ENCODE measurements at regions of chr4 and their contacts with region 1.

Region 1: GRCh38 chr4:89294573-89295269 is 12.9 kb downstream of the GPRIN3 start:
- DNase-seq: peak in 7 of 9 donors; percentile 62 to 88 (median 81)
- ATAC-seq: peak; percentile 86
- H3K4me3 ChIP-seq: peak overlapping the region; percentile 21
- H3K4me3 Mint-ChIP-seq: peak overlapping the region; percentile 38 to 83 (median 73)
- H3K27ac ChIP-seq: peak overlapping the region; percentile 69
- H3K27ac Mint-ChIP-seq: peak overlapping the region; percentile 81 to 97 (median 94)
- H3K4me1 ChIP-seq: peaks cover 73 to 82% of the 10 kb centered on the region in 2 donors
- H3K4me1 Mint-ChIP-seq: peaks cover 57 to 99% (median 86%) of the 10 kb centered on the region in 7 donors
- H3K27me3 ChIP-seq: no peaks in the 10 kb centered on the region
- H3K27me3 Mint-ChIP-seq: no peaks in the 10 kb centered on the region

Region 2: DNA sequence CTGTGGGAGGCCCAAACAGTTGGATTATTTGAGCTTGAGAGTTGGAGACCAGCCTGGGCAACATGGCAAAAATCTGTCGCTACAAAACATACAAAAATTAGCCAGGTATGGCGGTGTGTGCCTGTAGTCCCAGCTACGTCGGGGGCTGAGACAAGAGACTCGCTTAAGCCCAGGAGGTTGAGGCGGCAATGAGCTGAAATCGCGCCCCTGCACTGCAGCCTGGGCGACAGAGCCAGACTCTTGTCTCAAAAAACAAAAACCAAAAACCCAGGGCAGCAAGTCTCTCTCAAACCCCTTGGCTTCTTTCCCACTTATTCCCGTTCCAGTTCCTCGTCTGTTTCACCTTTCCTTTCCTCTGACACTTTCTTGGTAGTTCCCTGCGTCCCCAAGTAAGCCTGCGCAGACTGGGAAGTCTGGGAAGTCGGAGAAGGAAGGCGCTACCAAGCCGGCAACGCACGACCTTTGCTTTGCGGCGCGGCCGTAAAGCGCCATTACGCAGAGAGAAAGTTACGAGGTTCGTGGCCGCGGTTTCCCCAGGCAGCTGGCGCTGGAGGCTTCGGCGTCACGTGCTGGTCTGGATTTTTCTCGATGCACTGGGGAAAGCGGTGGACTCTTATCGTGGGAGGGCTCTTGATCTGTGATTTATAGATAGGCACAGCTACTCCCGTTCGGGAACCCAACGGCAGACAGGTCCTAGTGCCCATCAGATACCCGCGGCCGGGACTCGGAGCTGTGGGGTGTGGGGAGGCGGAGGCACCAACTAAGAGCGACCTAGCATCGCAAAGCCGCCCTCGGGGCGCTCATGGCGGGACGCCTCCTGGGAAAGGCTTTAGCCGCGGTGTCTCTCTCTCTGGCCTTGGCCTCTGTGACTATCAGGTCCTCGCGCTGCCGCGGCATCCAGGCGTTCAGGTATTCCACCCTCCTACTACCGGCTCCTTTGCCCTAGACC is 1872.3 kb before region 1 on chr4 and contains the start of gene NUDT9:
- CTCF ChIA-PET with region 1: no interaction called
- POLR2A ChIA-PET with region 1: no interaction called
- intact Hi-C with region 1: loop called in 1 of 2 experiments (anchors 5 kb)
- DNase-seq: peak; percentile 74 to 92 (median 89)
- ATAC-seq: peak; percentile 92
- H3K4me3 ChIP-seq: peak within 1 kb of the TSS; percentile 96
- H3K4me3 Mint-ChIP-seq: peak within 1 kb of the TSS; percentile 94 to 100 (median 98)
- H3K27ac ChIP-seq: peak within 1 kb of the TSS; percentile 85
- H3K27ac Mint-ChIP-seq: peak within 1 kb of the TSS; percentile 97 to 100 (median 99)
- H3K4me1 ChIP-seq: peaks cover 17% of the 10 kb centered on the region in 2 donors
- H3K4me1 Mint-ChIP-seq: peaks cover 14 to 59% (median 48%) of the 10 kb centered on the region in 7 donors
- H3K27me3 ChIP-seq: no peaks in the 10 kb centered on the region
- H3K27me3 Mint-ChIP-seq: no peaks in the 10 kb centered on the region
- total RNA-seq, gene NUDT9: 9.7 to 18.1 (median 10.5) TPM

Region 3: GRCh38 chr4:88443486-88443885 is 851.2 kb before region 1 on chr4:
- CTCF ChIA-PET with region 1: no interaction called
- POLR2A ChIA-PET with region 1: no interaction called
- intact Hi-C with region 1: no loop called
- DNase-seq: no peak
- ATAC-seq: no peak
- H3K4me3 ChIP-seq: no peak overlapping the region
- H3K4me3 Mint-ChIP-seq: no peak overlapping the region
- H3K27ac ChIP-seq: no peak overlapping the region
- H3K27ac Mint-ChIP-seq: peak overlapping the region in 1 of 9 donors; percentile 54
- H3K4me1 ChIP-seq: no peaks in the 10 kb centered on the region
- H3K4me1 Mint-ChIP-seq: peaks cover 0 to 18% (median 0%) of the 10 kb centered on the region in 7 donors
- H3K27me3 ChIP-seq: no peaks in the 10 kb centered on the region
- H3K27me3 Mint-ChIP-seq: no peaks in the 10 kb centered on the region

Region 4: GRCh38 chr4:88456757-88457306 is 837.9 kb before region 1 on chr4 and contains the start of gene HERC5:
- CTCF ChIA-PET with region 1: no interaction called
- POLR2A ChIA-PET with region 1: no interaction called
- intact Hi-C with region 1: loop called (anchors 5 to 10 kb)
- DNase-seq: peak; percentile 90 to 94 (median 92)
- ATAC-seq: peak; percentile 98
- H3K4me3 ChIP-seq: peak within 1 kb of the TSS; percentile 100
- H3K4me3 Mint-ChIP-seq: peak within 1 kb of the TSS; percentile 87 to 100 (median 98)
- H3K27ac ChIP-seq: peak within 1 kb of the TSS; percentile 72
- H3K27ac Mint-ChIP-seq: peak within 1 kb of the TSS; percentile 94 to 100 (median 99)
- H3K4me1 ChIP-seq: peaks cover 5 to 6% of the 10 kb centered on the region in 2 donors
- H3K4me1 Mint-ChIP-seq: peaks cover 10 to 52% (median 37%) of the 10 kb centered on the region in 7 donors
- H3K27me3 ChIP-seq: no peaks in the 10 kb centered on the region
- H3K27me3 Mint-ChIP-seq: no peaks in the 10 kb centered on the region
- total RNA-seq, gene HERC5: 11.8 to 52.5 (median 14.1) TPM

Region 5: DNA sequence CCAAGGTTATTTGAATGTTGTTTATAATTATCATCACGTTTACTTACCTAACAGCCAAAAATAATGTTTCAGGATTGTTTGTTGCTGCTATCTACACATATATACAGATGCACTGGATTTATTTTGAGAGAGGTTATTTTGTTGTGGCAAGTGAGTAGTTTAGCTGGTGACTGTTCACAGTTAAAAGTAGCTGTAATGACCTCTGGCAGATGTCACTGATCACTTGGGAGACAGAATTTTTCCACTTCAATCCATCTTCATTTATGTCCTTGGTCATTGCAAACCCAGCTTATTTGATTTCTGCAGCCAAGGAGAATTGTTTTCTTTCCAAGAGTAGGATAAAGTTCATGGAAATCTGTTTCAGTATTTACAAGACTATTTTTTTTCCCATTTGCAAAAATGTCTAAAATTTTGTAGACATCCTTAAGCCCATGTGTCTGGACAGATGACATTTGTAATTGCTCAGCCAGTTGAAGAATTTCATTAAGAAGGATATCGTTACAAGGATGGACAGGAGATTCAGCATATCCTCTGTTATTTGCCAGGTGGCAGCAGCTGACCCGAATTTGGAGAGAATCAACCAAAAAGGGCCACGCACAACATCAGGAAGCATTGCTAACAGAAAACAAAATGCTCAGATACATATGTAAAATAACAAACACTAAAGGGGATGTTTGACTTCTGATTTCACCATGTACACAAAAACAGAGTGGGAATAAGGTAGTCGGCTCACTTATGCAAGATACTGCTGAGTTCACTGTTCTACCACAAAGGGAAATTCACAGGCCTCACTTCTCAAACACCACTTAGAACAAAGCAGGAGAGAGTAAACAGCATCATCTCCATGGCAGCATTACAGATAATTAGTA is 51.6 kb before region 1 on chr4:
- CTCF ChIA-PET with region 1: interaction called, 3 read pairs
- POLR2A ChIA-PET with region 1: no interaction called
- intact Hi-C with region 1: loop called in 1 of 2 experiments (anchors 1 kb)
- DNase-seq: peak in 7 of 9 donors; percentile 16 to 67 (median 35)
- ATAC-seq: peak; percentile 96
- H3K4me3 ChIP-seq: no peak overlapping the region
- H3K4me3 Mint-ChIP-seq: peak overlapping the region in 5 of 10 donors; percentile 9 to 73 (median 20)
- H3K27ac ChIP-seq: peak overlapping the region; percentile 39
- H3K27ac Mint-ChIP-seq: peak overlapping the region; percentile 44 to 94 (median 80)
- H3K4me1 ChIP-seq: peaks cover 13 to 40% of the 10 kb centered on the region in 2 donors
- H3K4me1 Mint-ChIP-seq: peaks cover 15 to 62% (median 46%) of the 10 kb centered on the region in 7 donors
- H3K27me3 ChIP-seq: no peaks in the 10 kb centered on the region
- H3K27me3 Mint-ChIP-seq: no peaks in the 10 kb centered on the region

Region 6: GRCh38 chr4:89283226-89284009 is 11.3 kb before region 1 on chr4:
- CTCF ChIA-PET with region 1: no interaction called
- POLR2A ChIA-PET with region 1: interaction called, 16 read pairs
- intact Hi-C with region 1: loop called (anchors 1 kb)
- DNase-seq: peak in 3 of 9 donors; percentile 24 to 36 (median 28)
- ATAC-seq: peak; percentile 82
- H3K4me3 ChIP-seq: peak overlapping the region; percentile 43
- H3K4me3 Mint-ChIP-seq: peak overlapping the region; percentile 7 to 77 (median 60)
- H3K27ac ChIP-seq: peak overlapping the region; percentile 38
- H3K27ac Mint-ChIP-seq: peak overlapping the region; percentile 5 to 92 (median 86)
- H3K4me1 ChIP-seq: peaks cover 30 to 77% of the 10 kb centered on the region in 2 donors
- H3K4me1 Mint-ChIP-seq: peaks cover 47 to 66% (median 61%) of the 10 kb centered on the region in 7 donors
- H3K27me3 ChIP-seq: no peaks in the 10 kb centered on the region
- H3K27me3 Mint-ChIP-seq: no peaks in the 10 kb centered on the region

Region 7: GRCh38 chr4:89316931-89317366 is 22.2 kb after region 1 on chr4:
- CTCF ChIA-PET with region 1: interaction called, 6 read pairs
- POLR2A ChIA-PET with region 1: interaction called, 28 read pairs
- intact Hi-C with region 1: no loop called
- DNase-seq: peak in 3 of 9 donors; percentile 12 to 22 (median 19)
- ATAC-seq: peak; percentile 87
- H3K4me3 ChIP-seq: no peak overlapping the region
- H3K4me3 Mint-ChIP-seq: peak overlapping the region in 9 of 10 donors; percentile 4 to 68 (median 53)
- H3K27ac ChIP-seq: peak overlapping the region; percentile 19
- H3K27ac Mint-ChIP-seq: peak overlapping the region; percentile 12 to 90 (median 82)
- H3K4me1 ChIP-seq: peaks cover 24 to 32% of the 10 kb centered on the region in 2 donors
- H3K4me1 Mint-ChIP-seq: peaks cover 22 to 39% (median 30%) of the 10 kb centered on the region in 7 donors
- H3K27me3 ChIP-seq: no peaks in the 10 kb centered on the region
- H3K27me3 Mint-ChIP-seq: no peaks in the 10 kb centered on the region

Region 8: GRCh38 chr4:89331686-89332544 is 37.2 kb after region 1 on chr4:
- CTCF ChIA-PET with region 1: no interaction called
- POLR2A ChIA-PET with region 1: no interaction called
- intact Hi-C with region 1: no loop called
- DNase-seq: no peak
- ATAC-seq: peak; percentile 67
- H3K4me3 ChIP-seq: no peak overlapping the region
- H3K4me3 Mint-ChIP-seq: no peak overlapping the region
- H3K27ac ChIP-seq: no peak overlapping the region
- H3K27ac Mint-ChIP-seq: peak overlapping the region in 1 of 9 donors; percentile 6
- H3K4me1 ChIP-seq: peaks cover 0 to 3% of the 10 kb centered on the region in 2 donors
- H3K4me1 Mint-ChIP-seq: peaks cover 0 to 23% (median 5%) of the 10 kb centered on the region in 7 donors
- H3K27me3 ChIP-seq: no peaks in the 10 kb centered on the region
- H3K27me3 Mint-ChIP-seq: no peaks in the 10 kb centered on the region

Region 9: DNA sequence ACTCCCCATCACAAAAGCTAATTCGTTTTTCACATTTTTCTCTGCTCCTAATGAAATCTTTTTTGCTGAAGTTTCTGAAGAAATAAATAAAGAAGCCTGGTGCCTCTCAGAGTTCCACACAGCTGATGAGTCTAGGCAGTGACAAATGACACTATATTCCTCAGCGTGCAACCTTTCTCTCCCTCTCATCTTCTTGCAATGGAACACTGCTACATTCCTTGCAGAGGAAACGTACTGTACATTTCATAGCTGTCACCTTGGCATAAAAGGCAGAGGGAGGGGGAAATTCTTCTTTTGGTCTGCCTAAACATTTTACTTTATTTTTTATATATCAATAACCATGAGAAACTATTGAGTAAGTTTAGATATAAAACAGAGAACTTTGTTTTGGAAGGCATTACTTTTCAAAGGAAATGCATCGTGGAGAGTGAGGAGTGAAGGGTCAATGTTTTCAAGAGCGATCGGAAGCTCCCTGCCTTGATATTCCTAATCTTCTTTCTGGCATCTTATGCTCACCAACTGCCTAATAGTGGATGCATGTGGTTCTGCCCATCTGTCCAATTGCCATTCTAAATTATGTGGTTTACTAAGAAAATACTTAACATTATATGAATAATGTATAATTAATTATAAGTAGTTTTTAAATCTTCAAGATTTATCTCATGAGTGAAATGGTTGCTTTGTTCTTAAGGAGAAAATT is 512.9 kb after region 1 on chr4:
- CTCF ChIA-PET with region 1: no interaction called
- POLR2A ChIA-PET with region 1: no interaction called
- intact Hi-C with region 1: no loop called
- DNase-seq: no peak
- ATAC-seq: no peak
- H3K4me3 ChIP-seq: no peak overlapping the region
- H3K4me3 Mint-ChIP-seq: no peak overlapping the region
- H3K27ac ChIP-seq: no peak overlapping the region
- H3K27ac Mint-ChIP-seq: no peak overlapping the region
- H3K4me1 ChIP-seq: no peaks in the 10 kb centered on the region
- H3K4me1 Mint-ChIP-seq: peaks cover 0 to under 1% (median 0%) of the 10 kb centered on the region in 7 donors
- H3K27me3 ChIP-seq: no peaks in the 10 kb centered on the region
- H3K27me3 Mint-ChIP-seq: peaks cover 0 to 3% (median 0%) of the 10 kb centered on the region in 5 donors

Measured in naive thymus-derived CD4-positive, alpha-beta T cell (primary cell).